H1 (cell line): ENCODE measurements at regions of chr11 and their contacts with region 1.

Region 1: DNA sequence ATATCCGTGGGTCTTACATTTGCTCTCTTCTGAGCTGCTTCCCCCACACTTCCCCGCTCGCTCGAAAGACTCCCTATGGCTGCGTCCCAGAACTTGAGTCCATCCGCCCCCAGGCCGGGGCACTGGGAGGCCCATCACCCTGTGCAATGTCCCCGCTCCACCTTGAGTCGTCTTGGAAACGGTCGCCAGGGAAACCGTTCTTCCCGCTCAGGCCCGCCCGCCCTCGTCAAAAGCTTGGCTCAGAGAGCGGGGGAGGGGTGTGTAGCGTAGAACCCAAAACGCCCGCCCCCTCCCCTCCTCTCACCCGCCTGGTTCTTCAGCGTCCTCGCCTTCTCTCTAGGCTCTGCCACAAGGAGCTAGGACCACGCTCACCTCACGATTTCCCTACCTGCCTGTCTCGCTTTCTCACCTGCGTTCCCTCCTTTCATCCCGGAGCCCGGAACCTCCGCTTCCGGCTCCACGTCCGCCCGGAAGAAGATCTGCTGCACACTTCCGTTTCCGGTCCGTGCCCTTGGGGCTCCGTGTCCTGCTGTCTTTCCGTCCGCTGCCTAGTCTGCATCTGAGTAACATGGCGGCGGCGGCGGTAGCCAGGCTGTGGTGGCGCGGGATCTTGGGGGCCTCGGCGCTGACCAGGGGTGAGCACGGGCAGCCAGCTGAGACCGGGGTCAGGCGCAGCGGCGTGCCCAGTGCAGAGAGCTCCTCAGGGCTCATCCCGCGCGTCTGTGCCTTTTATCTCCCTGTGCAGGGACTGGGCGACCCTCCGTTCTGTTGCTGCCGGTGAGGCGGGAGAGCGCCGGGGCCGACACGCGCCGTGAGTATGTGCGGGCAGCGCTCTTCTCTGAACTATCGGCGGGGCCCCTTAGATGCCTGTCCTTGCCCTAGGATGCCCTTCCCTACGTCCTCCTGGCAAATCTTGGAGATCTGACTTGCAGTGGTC is at the starts of genes KBTBD4 and NDUFS3:
- DNase-seq: peak; percentile 62 to 96
- H3K4me3 ChIP-seq: peak within 1 kb of the TSS; percentile 83 to 93 (median 90)
- H3K27ac ChIP-seq: peak within 1 kb of the TSS; percentile 97
- H3K4me1 ChIP-seq: peaks cover 0 to 5% (median 2%) of the 10 kb centered on the region in 4 experiments; a peak in 2 of 7 replicates
- H3K27me3 ChIP-seq: no peaks in the 10 kb centered on the region
- CTCF ChIP-seq: no peak
- EP300 ChIP-seq: peak; percentile 35 to 85
- POLR2A ChIP-seq: peak; percentile 38 to 91
- RAD21 ChIP-seq: peak in 1 of 2 experiments; percentile 8; a peak in 1 of 4 replicates
- total RNA-seq, gene KBTBD4: 12.0 and 14.0 TPM in 2 replicates
- total RNA-seq, gene NDUFS3: 135 and 136 TPM in 2 replicates

Region 2: GRCh38 chr11:47565340-47566148 is 13.2 kb before region 1 on chr11 and contains the start of gene PTPMT1:
- CTCF ChIA-PET with region 1: interaction called, 4 read pairs
- POLR2A ChIA-PET with region 1: interaction called, 83 read pairs
- DNase-seq: peak in 1 of 2 experiments; percentile 86
- H3K4me3 ChIP-seq: peak within 1 kb of the TSS; percentile 44 to 96 (median 95)
- H3K27ac ChIP-seq: peak within 1 kb of the TSS; percentile 53
- H3K4me1 ChIP-seq: peaks cover 0 to 3% (median 1%) of the 10 kb centered on the region in 4 experiments; a peak in 1 of 7 replicates
- H3K27me3 ChIP-seq: no peaks in the 10 kb centered on the region
- CTCF ChIP-seq: 0 out of 4 replicates have a peak, but pooled peaks of 1 of the 3 experiments have one; percentile 1
- EP300 ChIP-seq: peak in 1 of 2 experiments; percentile 9; a peak in 1 of 3 replicates
- POLR2A ChIP-seq: peak; percentile 48 to 82
- RAD21 ChIP-seq: no peak
- total RNA-seq, gene PTPMT1: 44.8 and 48.4 TPM in 2 replicates

Region 3: DNA sequence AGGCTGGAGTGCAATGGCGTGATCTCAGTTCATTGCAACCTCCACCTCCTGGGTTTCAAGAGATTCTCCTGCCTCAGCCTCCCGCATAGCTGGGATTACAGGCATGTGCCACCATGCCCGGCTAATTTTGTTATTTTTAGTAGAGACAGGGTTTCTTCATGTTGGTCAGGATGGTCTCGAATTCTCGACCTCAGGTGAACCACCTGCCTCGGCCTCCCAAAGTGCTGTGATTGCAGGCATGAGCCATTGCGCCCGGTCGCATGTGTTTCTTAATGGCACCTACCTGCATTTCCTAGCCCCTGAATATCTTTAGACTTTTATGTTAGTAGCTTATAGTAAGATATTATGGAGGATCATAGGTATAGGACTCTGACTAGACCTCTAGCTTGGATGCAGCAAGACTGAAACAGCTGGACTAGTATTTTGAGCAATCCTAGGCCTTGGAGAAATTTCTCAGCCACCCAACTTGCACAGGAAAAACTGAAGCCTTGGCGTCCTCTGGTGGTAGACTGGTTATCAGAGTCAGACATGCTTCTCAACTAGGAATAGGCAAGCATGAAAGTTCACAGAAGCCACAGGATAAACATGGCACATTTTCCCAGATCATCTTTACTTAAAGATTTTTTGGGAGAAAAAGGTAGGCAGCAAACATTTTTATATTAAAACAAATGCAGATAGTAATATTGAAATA is 38.1 kb after region 1 on chr11:
- CTCF ChIA-PET with region 1: interaction called, 5 read pairs
- POLR2A ChIA-PET with region 1: interaction called, 16 read pairs
- DNase-seq: no peak
- H3K4me3 ChIP-seq: no peak overlapping the region
- H3K27ac ChIP-seq: no peak overlapping the region
- H3K4me1 ChIP-seq: no peaks in the 10 kb centered on the region
- H3K27me3 ChIP-seq: no peaks in the 10 kb centered on the region
- CTCF ChIP-seq: peak; percentile 14 to 83 (median 68)
- EP300 ChIP-seq: no peak
- POLR2A ChIP-seq: no peak
- RAD21 ChIP-seq: peak; percentile 88 to 90

Region 4: GRCh38 chr11:47649276-47649675 is 70.5 kb after region 1 on chr11:
- CTCF ChIA-PET with region 1: no interaction called
- POLR2A ChIA-PET with region 1: no interaction called
- DNase-seq: no peak
- H3K4me3 ChIP-seq: no peak overlapping the region
- H3K27ac ChIP-seq: no peak overlapping the region
- H3K4me1 ChIP-seq: no peaks in the 10 kb centered on the region
- H3K27me3 ChIP-seq: no peaks in the 10 kb centered on the region
- CTCF ChIP-seq: no peak
- EP300 ChIP-seq: no peak
- POLR2A ChIP-seq: no peak
- RAD21 ChIP-seq: no peak

Region 5: DNA sequence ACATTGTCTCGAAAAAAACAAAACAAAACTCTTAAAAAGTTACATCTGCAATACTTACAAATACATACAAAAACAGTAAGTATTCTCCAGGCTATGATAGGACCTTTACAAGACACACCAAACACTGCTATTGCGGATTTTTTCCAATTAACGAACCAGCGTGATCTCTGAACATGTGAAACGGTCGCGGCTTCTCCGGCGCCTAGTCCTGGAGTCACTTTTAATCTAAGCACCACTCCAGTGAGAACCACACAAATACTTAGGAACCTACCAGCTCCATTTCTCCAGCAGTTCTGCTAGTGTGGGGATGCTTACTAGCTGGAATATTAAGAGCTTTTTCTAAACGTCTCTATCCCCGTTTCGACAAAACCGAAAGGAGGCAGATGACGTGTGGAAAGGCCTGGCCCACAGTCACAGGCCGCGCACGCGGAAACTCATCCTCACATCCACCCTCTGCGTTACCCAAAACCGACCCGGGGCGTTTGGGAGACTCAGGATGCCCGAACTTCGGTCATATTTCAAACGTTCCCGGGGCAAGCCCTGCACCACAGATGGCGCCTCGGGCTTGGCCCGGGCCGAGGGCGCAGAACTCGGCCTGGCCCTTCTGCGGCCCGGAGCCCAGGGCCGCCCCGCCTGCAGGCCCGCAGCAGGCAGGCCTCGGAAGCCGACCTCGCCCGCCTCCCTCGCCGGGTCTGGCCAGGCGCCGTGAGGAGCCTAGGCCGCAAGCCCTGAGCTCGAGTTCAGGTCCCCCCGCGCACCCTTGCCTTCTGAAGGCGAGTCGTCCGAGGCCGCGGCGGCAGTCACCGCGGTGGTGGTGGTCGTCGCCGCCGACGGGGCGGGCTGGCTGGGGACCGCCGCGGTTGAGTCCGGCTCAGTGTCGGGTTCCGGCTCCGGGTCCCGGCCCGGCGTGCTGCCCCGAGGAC is 187.8 kb after region 1 on chr11:
- CTCF ChIA-PET with region 1: no interaction called
- POLR2A ChIA-PET with region 1: no interaction called
- DNase-seq: no peak
- H3K4me3 ChIP-seq: peak overlapping the region; percentile 87 to 98 (median 94)
- H3K27ac ChIP-seq: peak overlapping the region; percentile 83
- H3K4me1 ChIP-seq: 0 out of 7 replicates have a peak, but pooled peaks cover 0 to 1% (median 0%) of the 10 kb centered on the region in 4 experiments
- H3K27me3 ChIP-seq: no peaks in the 10 kb centered on the region
- CTCF ChIP-seq: no peak
- EP300 ChIP-seq: no peak
- POLR2A ChIP-seq: no peak; a peak in 1 of 3 replicates
- RAD21 ChIP-seq: no peak